ENCODE measurements at regions of chr12 and their contacts with region 1.

Region 1: GRCh38 chr12:62021811-62022210 is 238.4 kb upstream of the USP15 start:
- DNase-seq: no peak
- ATAC-seq: no peak
- H3K4me3 ChIP-seq: no peak overlapping the region
- H3K27ac ChIP-seq: no peak overlapping the region
- H3K4me1 ChIP-seq: no peaks in the 10 kb centered on the region
- H3K27me3 ChIP-seq: no peaks in the 10 kb centered on the region
- CTCF ChIP-seq: no peak

Region 2: GRCh38 chr12:61823102-61823501 is 198.7 kb before region 1 on chr12:
- CTCF ChIA-PET with region 1: no interaction called
- POLR2A ChIA-PET with region 1: no interaction called
- in situ Hi-C with region 1: no loop called
- intact Hi-C with region 1: no loop called
- DNase-seq: no peak
- ATAC-seq: no peak
- H3K4me3 ChIP-seq: no peak overlapping the region
- H3K27ac ChIP-seq: no peak overlapping the region
- H3K4me1 ChIP-seq: no peaks in the 10 kb centered on the region
- H3K27me3 ChIP-seq: no peaks in the 10 kb centered on the region
- CTCF ChIP-seq: no peak

Region 3: DNA sequence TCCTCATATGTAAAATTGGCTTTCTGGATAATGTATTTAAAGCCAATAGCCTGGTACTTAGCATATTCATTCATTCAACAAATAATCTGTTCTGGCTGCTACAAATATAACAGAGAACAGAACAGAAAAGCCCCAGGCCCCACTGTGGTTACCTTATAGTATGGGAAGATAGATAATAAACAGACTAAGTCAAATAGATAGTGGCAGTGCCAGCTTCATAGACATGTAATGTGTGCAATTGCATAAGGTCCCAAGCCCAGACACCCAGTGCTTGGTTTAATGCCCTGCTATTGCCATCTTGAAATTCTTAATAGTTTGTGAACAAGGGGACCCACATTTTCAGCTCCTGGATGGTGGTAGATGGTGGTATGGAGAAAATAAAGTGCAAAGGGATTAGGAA is 81.8 kb before region 1 on chr12:
- CTCF ChIA-PET with region 1: no interaction called
- POLR2A ChIA-PET with region 1: no interaction called
- in situ Hi-C with region 1: no loop called
- intact Hi-C with region 1: no loop called
- DNase-seq: no peak
- ATAC-seq: no peak
- H3K4me3 ChIP-seq: no peak overlapping the region
- H3K27ac ChIP-seq: no peak overlapping the region
- H3K4me1 ChIP-seq: no peaks in the 10 kb centered on the region
- H3K27me3 ChIP-seq: no peaks in the 10 kb centered on the region
- CTCF ChIP-seq: no peak

Region 4: GRCh38 chr12:62192180-62192902 is 170.5 kb after region 1 on chr12:
- CTCF ChIA-PET with region 1: no interaction called
- POLR2A ChIA-PET with region 1: no interaction called
- in situ Hi-C with region 1: no loop called
- intact Hi-C with region 1: loop called (anchors 10 kb)
- DNase-seq: peak; percentile 32
- ATAC-seq: peak; percentile 96
- H3K4me3 ChIP-seq: peak overlapping the region; percentile 27 to 64
- H3K27ac ChIP-seq: no peak overlapping the region
- H3K4me1 ChIP-seq: peaks cover 3% of the 10 kb centered on the region; the same call in 1 of the 2 replicates
- H3K27me3 ChIP-seq: peaks cover 10% of the 10 kb centered on the region
- CTCF ChIP-seq: peak; percentile 76

Measured in Panc1 (cell line).